Activated CD4-positive, alpha-beta memory T cell treated with anti-CD3 and anti-CD28 coated beads for 36 hours (primary cell): ENCODE measurements at regions of chr19 and their contacts with region 1.

Region 1: GRCh38 chr19:49331616-49332055 is 3.6 kb upstream of the CD37 start:
- DNase-seq: peak; percentile 80
- H3K4me3 Mint-ChIP-seq: peak overlapping the region; percentile 43
- H3K27ac Mint-ChIP-seq: peak overlapping the region; percentile 99
- H3K4me1 Mint-ChIP-seq: peaks cover 69% of the 10 kb centered on the region
- H3K27me3 Mint-ChIP-seq: no peaks in the 10 kb centered on the region

Region 2: GRCh38 chr19:49363268-49364082 is 31.8 kb after region 1 on chr19 and contains the start of gene DKKL1:
- CTCF ChIA-PET with region 1: interaction called, 3 read pairs
- POLR2A ChIA-PET with region 1: interaction called, 3 read pairs
- intact Hi-C with region 1: loop called (anchors 2 kb)
- DNase-seq: peak; percentile 93
- H3K4me3 Mint-ChIP-seq: no peak within 1 kb of the TSS
- H3K27ac Mint-ChIP-seq: no peak within 1 kb of the TSS
- H3K4me1 Mint-ChIP-seq: peaks cover 4% of the 10 kb centered on the region
- H3K27me3 Mint-ChIP-seq: peaks cover 14% of the 10 kb centered on the region
- total RNA-seq, gene DKKL1: not detected